Activated CD4-positive, alpha-beta T cell treated with anti-CD3 and anti-CD28 coated beads for 36 hours (primary cell): ENCODE measurements at regions of chr15 and their contacts with region 1.

Region 1: GRCh38 chr15:65028921-65029735 is at the start of gene MTFMT:
- DNase-seq: peak; percentile 96
- ATAC-seq: peak; percentile 95
- H3K4me3 Mint-ChIP-seq: peak within 1 kb of the TSS; percentile 85
- H3K27ac Mint-ChIP-seq: peak within 1 kb of the TSS; percentile 79
- H3K4me1 Mint-ChIP-seq: peaks cover 20% of the 10 kb centered on the region
- H3K27me3 Mint-ChIP-seq: no peaks in the 10 kb centered on the region
- total RNA-seq, gene MTFMT: 19.0 to 19.9 TPM

Region 2: GRCh38 chr15:64731012-64731806 is 297.9 kb before region 1 on chr15:
- CTCF ChIA-PET with region 1: interaction called, 3 read pairs
- POLR2A ChIA-PET with region 1: no interaction called
- intact Hi-C with region 1: loop called in 1 of 2 experiments (anchors 5 kb)
- DNase-seq: peak; percentile 93
- ATAC-seq: peak; percentile 84
- H3K4me3 Mint-ChIP-seq: no peak overlapping the region
- H3K27ac Mint-ChIP-seq: no peak overlapping the region
- H3K4me1 Mint-ChIP-seq: peaks cover 4% of the 10 kb centered on the region
- H3K27me3 Mint-ChIP-seq: peaks cover 2% of the 10 kb centered on the region

Region 3: GRCh38 chr15:64989416-64990167 is 39.5 kb before region 1 on chr15 and contains the start of gene SPG21:
- CTCF ChIA-PET with region 1: interaction called, 3 read pairs
- POLR2A ChIA-PET with region 1: no interaction called
- intact Hi-C with region 1: loop called (anchors 1 to 5 kb)
- DNase-seq: peak; percentile 94
- ATAC-seq: peak; percentile 96
- H3K4me3 Mint-ChIP-seq: peak within 1 kb of the TSS; percentile 96
- H3K27ac Mint-ChIP-seq: peak within 1 kb of the TSS; percentile 88
- H3K4me1 Mint-ChIP-seq: peaks cover 37% of the 10 kb centered on the region
- H3K27me3 Mint-ChIP-seq: no peaks in the 10 kb centered on the region
- total RNA-seq, gene SPG21: 74.1 to 79.1 TPM

Region 4: GRCh38 chr15:65077981-65078352 is 48.8 kb after region 1 on chr15:
- CTCF ChIA-PET with region 1: interaction called, 14 read pairs
- POLR2A ChIA-PET with region 1: no interaction called
- intact Hi-C with region 1: loop called (anchors 1 kb)
- DNase-seq: peak; percentile 80
- ATAC-seq: peak; percentile 73
- H3K4me3 Mint-ChIP-seq: no peak overlapping the region
- H3K27ac Mint-ChIP-seq: no peak overlapping the region
- H3K4me1 Mint-ChIP-seq: peaks cover 18% of the 10 kb centered on the region
- H3K27me3 Mint-ChIP-seq: peaks cover 25% of the 10 kb centered on the region

Region 5: DNA sequence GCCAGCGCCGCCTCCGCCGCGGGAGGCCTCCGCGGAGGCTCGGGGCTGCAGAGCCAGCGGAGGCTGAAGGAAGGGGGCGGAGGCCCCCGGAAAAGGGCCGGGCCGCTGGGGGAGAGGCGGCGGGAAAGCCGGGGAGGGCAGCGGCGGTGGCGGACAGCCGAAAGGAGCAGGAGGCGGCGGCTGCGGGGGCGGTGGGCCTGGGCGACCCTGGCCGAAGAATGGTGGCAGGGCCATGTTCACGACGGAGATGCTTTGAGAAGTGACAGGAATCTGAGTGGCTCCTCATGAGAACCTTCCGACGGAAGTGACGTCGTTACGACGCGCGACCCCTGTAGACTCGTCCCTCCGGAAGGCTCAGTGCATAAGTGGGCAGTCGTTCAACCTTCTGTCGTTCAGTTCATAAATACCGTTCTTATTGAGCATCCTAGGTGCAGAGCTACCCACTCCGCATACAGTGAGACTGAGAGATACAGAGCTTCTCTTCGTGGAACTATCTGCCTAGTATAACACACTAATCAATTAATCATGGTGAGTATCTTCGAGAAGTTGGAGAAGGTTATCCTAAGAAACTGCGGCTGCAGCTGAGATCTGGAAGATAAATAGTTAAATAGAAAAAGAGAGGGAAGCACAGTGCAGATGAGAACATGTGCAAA is 104.5 kb after region 1 on chr15 and contains the start of gene PDCD7:
- CTCF ChIA-PET with region 1: no interaction called
- POLR2A ChIA-PET with region 1: no interaction called
- intact Hi-C with region 1: loop called in 1 of 2 experiments (anchors 2 kb)
- DNase-seq: peak; percentile 91
- ATAC-seq: peak; percentile 96
- H3K4me3 Mint-ChIP-seq: peak within 1 kb of the TSS; percentile 85
- H3K27ac Mint-ChIP-seq: peak within 1 kb of the TSS; percentile 93
- H3K4me1 Mint-ChIP-seq: peaks cover 26% of the 10 kb centered on the region
- H3K27me3 Mint-ChIP-seq: no peaks in the 10 kb centered on the region
- total RNA-seq, gene PDCD7: 16.6 to 24.8 TPM

Region 6: DNA sequence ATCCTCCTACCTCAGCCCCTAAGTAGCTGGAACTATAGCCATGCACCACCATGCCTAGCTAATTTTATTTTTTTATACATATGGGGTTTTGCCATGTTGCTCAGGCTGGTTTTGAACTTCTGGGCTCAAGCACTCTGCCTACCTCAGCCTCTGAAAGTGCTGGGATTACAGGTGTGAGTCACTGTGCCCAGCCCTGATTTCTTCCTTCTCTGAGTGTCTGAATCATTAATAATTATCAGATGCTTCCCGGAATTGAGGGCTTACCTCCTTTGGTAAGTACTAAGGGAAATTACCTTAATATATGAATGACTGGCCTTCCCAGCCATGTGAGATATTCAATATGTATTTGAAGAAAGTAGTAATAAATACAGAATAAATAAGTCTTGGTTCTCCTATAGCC is 148.8 kb after region 1 on chr15:
- CTCF ChIA-PET with region 1: no interaction called
- POLR2A ChIA-PET with region 1: no interaction called
- intact Hi-C with region 1: no loop called
- DNase-seq: no peak
- ATAC-seq: no peak
- H3K4me3 Mint-ChIP-seq: no peak overlapping the region
- H3K27ac Mint-ChIP-seq: no peak overlapping the region
- H3K4me1 Mint-ChIP-seq: peaks cover 25% of the 10 kb centered on the region
- H3K27me3 Mint-ChIP-seq: no peaks in the 10 kb centered on the region

Region 7: DNA sequence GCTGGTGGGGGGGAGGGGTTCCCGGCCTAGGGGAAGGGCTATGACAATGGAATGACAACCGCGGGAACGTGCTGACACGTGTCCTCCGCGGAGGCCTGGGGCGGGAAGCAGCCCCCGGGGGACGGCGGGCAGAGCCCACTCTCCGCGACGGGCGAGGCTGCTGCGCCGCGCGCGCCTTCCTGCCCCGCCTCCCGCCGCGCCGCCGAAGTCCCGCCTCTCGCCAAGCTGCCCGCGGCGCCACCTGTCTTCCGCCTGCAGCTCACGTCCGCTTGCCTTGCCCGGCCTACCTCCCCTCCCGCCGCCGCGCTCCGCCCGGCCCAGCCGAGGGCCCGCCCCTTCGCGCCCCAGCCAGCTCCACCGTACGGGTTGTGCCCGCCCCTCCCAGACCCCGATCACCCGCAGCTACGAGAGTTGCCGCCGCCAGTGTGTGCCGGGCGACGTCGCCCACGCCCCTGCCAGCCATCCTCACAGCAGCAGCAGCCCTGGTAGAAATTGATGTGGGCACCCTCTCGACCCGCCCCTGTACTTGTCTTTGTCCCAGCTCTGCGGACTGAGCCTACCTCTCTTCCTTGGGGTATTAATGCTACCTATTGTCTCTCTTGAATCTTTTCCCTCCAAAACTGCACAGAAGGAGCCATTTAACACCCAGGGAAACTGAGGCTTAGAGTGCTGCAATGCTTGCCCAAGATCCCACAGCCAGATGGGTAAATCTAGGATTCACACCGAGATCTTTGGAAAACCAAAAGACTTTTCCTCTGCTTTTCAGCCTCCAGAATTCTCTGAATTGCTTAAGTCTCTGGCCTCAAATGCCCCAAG is 257.8 kb after region 1 on chr15 and contains the start of gene PARP16:
- CTCF ChIA-PET with region 1: interaction called, 3 read pairs
- POLR2A ChIA-PET with region 1: no interaction called
- intact Hi-C with region 1: loop called in 1 of 2 experiments (anchors 2 kb)
- DNase-seq: peak; percentile 96
- ATAC-seq: peak; percentile 98
- H3K4me3 Mint-ChIP-seq: peak within 1 kb of the TSS; percentile 87
- H3K27ac Mint-ChIP-seq: peak within 1 kb of the TSS; percentile 89
- H3K4me1 Mint-ChIP-seq: peaks cover 30% of the 10 kb centered on the region
- H3K27me3 Mint-ChIP-seq: no peaks in the 10 kb centered on the region
- total RNA-seq, gene PARP16: 17.9 to 20.1 TPM

Region 8: GRCh38 chr15:65384895-65385858 is 356.0 kb after region 1 on chr15:
- CTCF ChIA-PET with region 1: interaction called, 3 read pairs
- POLR2A ChIA-PET with region 1: no interaction called
- intact Hi-C with region 1: loop called in 1 of 2 experiments (anchors 1 kb)
- DNase-seq: peak; percentile 93
- ATAC-seq: peak; percentile 90
- H3K4me3 Mint-ChIP-seq: peak overlapping the region; percentile 79
- H3K27ac Mint-ChIP-seq: peak overlapping the region; percentile 71
- H3K4me1 Mint-ChIP-seq: peaks cover 11% of the 10 kb centered on the region
- H3K27me3 Mint-ChIP-seq: peaks cover 10% of the 10 kb centered on the region